ENCODE measurements at regions of chr17 and their contacts with region 1.

Region 1: GRCh38 chr17:76264755-76265596 is at the start of gene UBALD2:
- DNase-seq: peak; percentile 90 to 99 (median 98)
- ATAC-seq: peak; percentile 80 to 86
- H3K4me3 Mint-ChIP-seq: peak within 1 kb of the TSS; percentile 88 to 97 (median 92)
- H3K27ac Mint-ChIP-seq: peak within 1 kb of the TSS; percentile 91 to 98 (median 96)
- H3K4me1 Mint-ChIP-seq: peaks cover 35 to 79% (median 64%) of the 10 kb centered on the region in 4 donors
- H3K27me3 Mint-ChIP-seq: no peaks in the 10 kb centered on the region
- polyA plus RNA-seq, gene UBALD2: 6.6 to 9.7 (median 8.2) TPM

Region 2: DNA sequence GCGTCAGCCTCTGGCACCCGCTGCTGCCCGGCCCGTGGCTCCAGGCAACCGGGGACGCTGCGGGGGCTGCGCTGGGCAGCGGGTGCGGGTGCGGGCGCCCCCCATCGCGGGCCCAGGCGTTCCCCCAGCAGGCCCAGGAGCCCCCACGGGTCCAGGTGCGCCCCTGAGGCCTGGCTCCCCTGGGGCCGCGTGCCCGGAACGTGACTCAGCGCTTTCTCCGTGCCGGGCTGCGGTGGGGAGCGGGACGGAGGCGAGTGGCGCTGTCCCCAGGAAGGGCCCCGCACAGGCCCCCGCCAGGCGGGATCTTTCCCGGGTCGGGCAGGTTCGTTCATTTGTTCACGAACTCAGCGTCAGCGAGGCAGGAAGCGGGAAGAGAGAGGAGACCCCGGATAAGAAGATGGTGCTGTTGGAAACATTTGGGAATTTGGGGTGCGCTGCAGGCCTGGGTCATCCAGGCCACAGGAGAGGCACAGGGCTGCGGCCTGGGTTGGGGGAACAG is 143.0 kb before region 1 on chr17:
- POLR2A ChIA-PET with region 1: interaction called, 152 read pairs
- DNase-seq: no peak
- ATAC-seq: peak; percentile 13 to 37
- H3K4me3 Mint-ChIP-seq: peak overlapping the region; percentile 28 to 78 (median 63)
- H3K27ac Mint-ChIP-seq: peak overlapping the region in 8 of 10 donors; percentile 46 to 90 (median 80)
- H3K4me1 Mint-ChIP-seq: peaks cover 18 to 40% (median 31%) of the 10 kb centered on the region in 4 donors
- H3K27me3 Mint-ChIP-seq: no peaks in the 10 kb centered on the region

Region 3: DNA sequence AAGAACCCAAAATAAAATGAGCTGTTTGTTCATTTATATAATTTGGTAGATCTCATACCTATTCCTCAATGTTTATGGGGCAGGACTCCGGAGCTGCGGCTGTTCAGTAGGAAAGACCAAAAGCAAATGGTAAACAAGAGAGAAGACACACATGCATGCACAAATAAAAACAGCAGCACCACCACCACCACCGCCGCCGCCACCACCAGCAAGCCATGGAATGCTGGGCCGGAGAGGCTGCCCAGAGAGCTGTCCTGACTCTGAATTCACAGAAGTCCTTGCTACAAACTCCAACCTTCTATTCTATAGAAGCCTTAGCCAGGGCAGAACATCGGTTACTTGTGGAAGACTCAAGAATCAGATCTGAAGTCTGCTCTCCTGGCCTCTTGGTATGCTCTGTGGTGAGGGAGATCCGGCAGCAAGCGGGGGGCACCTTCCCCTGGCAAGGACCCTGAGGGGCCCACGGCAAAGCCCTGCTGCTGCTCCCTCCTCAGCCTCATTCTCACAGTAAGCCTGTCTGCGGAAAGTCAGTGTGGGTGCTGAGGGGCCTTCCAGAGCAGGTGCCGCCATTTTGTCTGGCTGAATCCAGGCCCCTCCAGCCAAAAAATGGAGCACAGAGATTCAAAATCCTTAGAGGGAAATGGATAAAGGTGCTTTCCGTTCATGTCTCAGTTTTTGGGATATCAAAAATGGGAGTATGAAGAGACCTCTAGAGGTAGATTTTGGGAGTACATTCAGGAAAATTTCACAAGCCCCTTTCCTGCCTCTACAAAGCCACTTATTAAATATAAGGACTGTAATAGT is 117.6 kb before region 1 on chr17:
- POLR2A ChIA-PET with region 1: interaction called, 72 read pairs
- DNase-seq: no peak
- ATAC-seq: no peak
- H3K4me3 Mint-ChIP-seq: no peak overlapping the region
- H3K27ac Mint-ChIP-seq: peak overlapping the region; percentile 96 to 100 (median 98)
- H3K4me1 Mint-ChIP-seq: peaks cover 33 to 87% (median 75%) of the 10 kb centered on the region in 4 donors
- H3K27me3 Mint-ChIP-seq: no peaks in the 10 kb centered on the region

Region 4: GRCh38 chr17:76191896-76192295 is 73.1 kb before region 1 on chr17:
- POLR2A ChIA-PET with region 1: interaction called, 527 read pairs
- DNase-seq: peak in 9 of 10 donors; percentile 20 to 92 (median 69)
- ATAC-seq: peak; percentile 90
- H3K4me3 Mint-ChIP-seq: peak overlapping the region; percentile 56 to 84 (median 78)
- H3K27ac Mint-ChIP-seq: peak overlapping the region; percentile 90 to 99 (median 96)
- H3K4me1 Mint-ChIP-seq: peaks cover 43 to 84% (median 80%) of the 10 kb centered on the region in 4 donors
- H3K27me3 Mint-ChIP-seq: no peaks in the 10 kb centered on the region

Region 5: GRCh38 chr17:76278952-76279741 is 14.2 kb after region 1 on chr17:
- POLR2A ChIA-PET with region 1: interaction called, 923 read pairs
- DNase-seq: peak; percentile 70 to 93 (median 83)
- ATAC-seq: peak; percentile 92
- H3K4me3 Mint-ChIP-seq: peak overlapping the region in 1 of 10 donors; percentile 20
- H3K27ac Mint-ChIP-seq: peak overlapping the region in 8 of 10 donors; percentile 20 to 86 (median 46)
- H3K4me1 Mint-ChIP-seq: peaks cover 16 to 38% (median 32%) of the 10 kb centered on the region in 4 donors
- H3K27me3 Mint-ChIP-seq: no peaks in the 10 kb centered on the region

Region 6: DNA sequence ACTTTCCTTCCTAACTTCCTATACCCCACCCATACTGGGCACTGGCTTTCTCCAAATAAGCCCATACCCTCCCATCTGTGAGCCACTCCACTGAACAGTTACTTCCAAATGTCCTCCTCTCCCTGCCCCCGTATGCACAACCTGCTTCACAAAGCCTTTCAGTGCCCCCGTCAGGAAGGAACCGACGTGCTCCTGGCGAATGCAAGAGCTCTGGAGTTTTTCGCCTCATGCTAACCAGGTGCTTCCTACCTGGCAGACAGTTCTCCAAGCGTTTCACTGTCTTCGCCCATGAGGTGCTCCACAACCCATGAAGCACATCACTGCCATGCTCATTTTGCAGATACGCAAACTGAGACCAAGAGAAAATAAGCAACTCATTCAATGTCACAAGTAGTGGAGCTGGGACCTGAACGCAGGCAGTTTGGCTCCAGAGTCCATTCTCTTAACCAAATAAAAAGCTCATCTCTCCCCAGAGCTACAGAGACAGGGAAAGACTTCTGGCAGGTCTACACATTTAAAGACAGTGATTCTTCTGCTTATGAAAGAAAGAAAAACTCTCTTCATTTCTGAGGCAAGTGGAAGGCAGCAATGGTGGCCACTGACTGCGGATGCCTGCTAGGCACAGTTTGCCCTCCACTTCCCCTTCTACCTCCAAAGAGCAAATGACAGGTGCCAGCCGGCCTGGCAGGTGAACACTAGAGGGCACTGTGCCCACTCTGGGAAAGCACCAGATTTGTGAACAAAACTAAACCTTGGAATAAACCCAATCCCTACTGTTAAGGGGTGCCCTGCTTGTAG is 143.3 kb after region 1 on chr17:
- POLR2A ChIA-PET with region 1: no interaction called
- DNase-seq: peak; percentile 51 to 84 (median 68)
- ATAC-seq: peak; percentile 92 to 99
- H3K4me3 Mint-ChIP-seq: no peak overlapping the region
- H3K27ac Mint-ChIP-seq: peak overlapping the region in 4 of 10 donors; percentile 26 to 81 (median 48)
- H3K4me1 Mint-ChIP-seq: peaks cover 2 to 30% (median 11%) of the 10 kb centered on the region in 4 donors
- H3K27me3 Mint-ChIP-seq: no peaks in the 10 kb centered on the region

Measured in naive thymus-derived CD8-positive, alpha-beta T cell (primary cell).